Activated T-helper 2 cell treated with anti-CD3 and anti-CD28 coated beads, Interferon-gamma antibody, Interleukin-2, Interleukin-4, amounts not matched to agents 10 μg/mL and 5 μg/mL and 100 μg/mL, durations not matched to agents 14 hours and 24 hours and 36 hours (primary cell): ENCODE measurements at regions of chr17 and their contacts with region 1.

Region 1: GRCh38 chr17:68346448-68346847 is 55.2 kb downstream of the ARSG start:
- DNase-seq: peak; percentile 67
- H3K4me3 Mint-ChIP-seq: peak overlapping the region; percentile 59
- H3K27ac Mint-ChIP-seq: peak overlapping the region; percentile 95
- H3K4me1 Mint-ChIP-seq: peaks cover 65% of the 10 kb centered on the region
- H3K27me3 Mint-ChIP-seq: no peaks in the 10 kb centered on the region

Region 2: DNA sequence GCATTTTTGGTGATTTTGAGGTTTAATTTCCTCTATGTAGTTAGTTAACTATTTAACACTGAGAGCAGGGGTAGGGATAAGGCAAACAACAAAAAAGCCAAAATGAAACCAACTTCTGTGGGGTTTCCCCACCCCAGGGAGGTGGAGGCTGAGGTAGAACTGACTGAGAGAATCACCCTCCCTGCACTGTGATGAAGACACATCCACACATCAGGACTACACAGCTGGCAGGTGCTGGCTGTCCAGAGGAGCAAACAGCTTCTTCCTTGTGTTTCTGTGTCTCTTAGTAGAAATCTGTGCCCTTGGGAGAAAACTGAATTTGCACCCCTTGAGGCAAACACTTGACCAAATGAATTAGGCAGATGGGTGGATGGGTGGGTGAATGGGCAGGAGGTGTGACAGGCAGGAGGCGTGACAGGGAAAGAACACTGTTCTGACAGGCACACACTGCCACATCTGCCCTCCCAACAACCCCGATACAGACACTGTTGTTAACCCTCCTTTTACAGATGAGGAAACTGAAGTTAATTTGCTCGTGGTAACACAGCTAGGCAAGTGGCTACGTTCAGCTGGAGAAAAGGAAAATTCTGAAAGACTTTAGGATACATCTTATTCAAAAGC is 161.5 kb before region 1 on chr17:
- intact Hi-C with region 1: loop called (anchors 5 kb)
- DNase-seq: peak; percentile 67
- H3K4me3 Mint-ChIP-seq: peak overlapping the region; percentile 37
- H3K27ac Mint-ChIP-seq: peak overlapping the region; percentile 83
- H3K4me1 Mint-ChIP-seq: peaks cover 53% of the 10 kb centered on the region
- H3K27me3 Mint-ChIP-seq: no peaks in the 10 kb centered on the region

Region 3: DNA sequence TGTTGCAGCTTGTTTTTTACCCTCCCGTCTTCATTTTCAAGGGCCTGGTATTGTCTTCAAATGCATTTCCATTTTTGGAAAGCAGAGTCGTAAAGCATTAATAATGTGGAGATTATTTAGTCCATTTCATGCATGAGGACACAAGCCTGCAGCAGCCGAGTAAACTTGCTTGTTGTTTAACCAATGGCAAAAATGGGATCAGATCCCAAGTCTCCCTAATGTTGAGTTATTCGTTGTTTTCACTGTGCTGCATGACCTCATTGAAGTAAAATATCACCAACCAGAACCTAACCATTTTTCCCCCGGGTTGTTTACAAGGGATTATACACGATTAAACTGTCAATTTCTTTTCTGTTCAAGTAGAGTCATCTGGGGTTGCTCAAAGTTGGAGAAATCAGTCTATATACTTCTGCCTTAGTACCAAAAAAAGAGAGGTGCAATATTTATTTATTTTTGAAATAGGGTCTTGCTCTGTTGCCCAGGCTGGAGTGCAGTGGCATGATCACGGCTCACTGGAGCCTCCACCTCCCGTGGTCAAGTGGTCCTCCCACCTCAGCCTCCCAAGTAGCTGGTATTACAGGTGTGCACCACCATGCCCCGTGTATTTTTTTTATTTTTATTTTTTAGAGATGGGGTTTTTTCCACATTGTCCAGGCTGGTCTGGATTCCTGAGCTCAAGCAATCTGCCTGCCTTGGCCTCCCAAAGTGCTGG is 86.2 kb before region 1 on chr17:
- intact Hi-C with region 1: loop called (anchors 5 kb)
- DNase-seq: no peak
- H3K4me3 Mint-ChIP-seq: peak overlapping the region; percentile 77
- H3K27ac Mint-ChIP-seq: peak overlapping the region; percentile 93
- H3K4me1 Mint-ChIP-seq: peaks cover 67% of the 10 kb centered on the region
- H3K27me3 Mint-ChIP-seq: no peaks in the 10 kb centered on the region

Region 4: DNA sequence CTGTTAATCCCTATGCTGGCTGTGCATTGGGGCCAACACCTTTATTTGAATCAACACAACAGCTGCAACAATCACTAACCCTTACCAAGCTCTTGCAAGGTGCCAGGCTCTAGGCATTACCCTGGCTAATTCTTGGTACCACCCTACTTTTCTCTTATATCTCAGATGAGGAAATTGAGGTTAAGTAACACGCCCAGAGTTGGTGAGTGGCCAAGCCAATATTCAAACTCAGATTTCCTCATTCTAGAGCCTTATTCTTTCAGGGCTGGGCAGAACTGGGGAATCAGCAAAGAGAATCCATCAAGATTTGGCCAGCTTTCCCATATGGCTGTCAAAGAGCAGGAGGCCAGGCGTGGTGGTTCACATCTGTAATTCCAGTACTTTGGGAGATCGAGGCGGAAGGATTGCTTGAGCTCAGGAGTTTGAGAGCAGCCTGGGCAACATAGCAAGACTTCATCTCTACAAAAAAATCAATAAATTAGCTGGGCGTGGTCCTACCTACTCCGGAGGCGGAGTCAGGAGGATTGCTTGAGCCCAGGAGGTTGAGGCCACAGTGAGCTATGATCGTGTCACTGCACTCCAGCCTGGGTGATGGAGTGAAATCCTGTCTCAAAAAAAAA is 31.4 kb before region 1 on chr17:
- intact Hi-C with region 1: loop called (anchors 5 kb)
- DNase-seq: no peak
- H3K4me3 Mint-ChIP-seq: no peak overlapping the region
- H3K27ac Mint-ChIP-seq: no peak overlapping the region
- H3K4me1 Mint-ChIP-seq: peaks cover 45% of the 10 kb centered on the region
- H3K27me3 Mint-ChIP-seq: no peaks in the 10 kb centered on the region

Region 5: GRCh38 chr17:68356520-68356919 is 10.1 kb after region 1 on chr17:
- intact Hi-C with region 1: loop called (anchors 1 kb)
- DNase-seq: peak; percentile 75
- H3K4me3 Mint-ChIP-seq: peak overlapping the region; percentile 73
- H3K27ac Mint-ChIP-seq: peak overlapping the region; percentile 86
- H3K4me1 Mint-ChIP-seq: peaks cover 57% of the 10 kb centered on the region
- H3K27me3 Mint-ChIP-seq: no peaks in the 10 kb centered on the region

Region 6: GRCh38 chr17:68398691-68399637 is 52.5 kb after region 1 on chr17:
- intact Hi-C with region 1: loop called (anchors 2 kb)
- DNase-seq: peak; percentile 19
- H3K4me3 Mint-ChIP-seq: peak overlapping the region; percentile 39
- H3K27ac Mint-ChIP-seq: peak overlapping the region; percentile 84
- H3K4me1 Mint-ChIP-seq: peaks cover 31% of the 10 kb centered on the region
- H3K27me3 Mint-ChIP-seq: no peaks in the 10 kb centered on the region